ENCODE measurements at regions of chr1 and their contacts with region 1.

Region 1: GRCh38 chr1:30718636-30719405 is 4.6 kb downstream of the MATN1 start:
- DNase-seq: peak; percentile 89
- ATAC-seq: peak; percentile 69
- H3K4me3 Mint-ChIP-seq: peak overlapping the region; percentile 87
- H3K27ac Mint-ChIP-seq: peak overlapping the region; percentile 96
- H3K4me1 Mint-ChIP-seq: peaks cover 15% of the 10 kb centered on the region
- H3K27me3 Mint-ChIP-seq: no peaks in the 10 kb centered on the region

Region 2: DNA sequence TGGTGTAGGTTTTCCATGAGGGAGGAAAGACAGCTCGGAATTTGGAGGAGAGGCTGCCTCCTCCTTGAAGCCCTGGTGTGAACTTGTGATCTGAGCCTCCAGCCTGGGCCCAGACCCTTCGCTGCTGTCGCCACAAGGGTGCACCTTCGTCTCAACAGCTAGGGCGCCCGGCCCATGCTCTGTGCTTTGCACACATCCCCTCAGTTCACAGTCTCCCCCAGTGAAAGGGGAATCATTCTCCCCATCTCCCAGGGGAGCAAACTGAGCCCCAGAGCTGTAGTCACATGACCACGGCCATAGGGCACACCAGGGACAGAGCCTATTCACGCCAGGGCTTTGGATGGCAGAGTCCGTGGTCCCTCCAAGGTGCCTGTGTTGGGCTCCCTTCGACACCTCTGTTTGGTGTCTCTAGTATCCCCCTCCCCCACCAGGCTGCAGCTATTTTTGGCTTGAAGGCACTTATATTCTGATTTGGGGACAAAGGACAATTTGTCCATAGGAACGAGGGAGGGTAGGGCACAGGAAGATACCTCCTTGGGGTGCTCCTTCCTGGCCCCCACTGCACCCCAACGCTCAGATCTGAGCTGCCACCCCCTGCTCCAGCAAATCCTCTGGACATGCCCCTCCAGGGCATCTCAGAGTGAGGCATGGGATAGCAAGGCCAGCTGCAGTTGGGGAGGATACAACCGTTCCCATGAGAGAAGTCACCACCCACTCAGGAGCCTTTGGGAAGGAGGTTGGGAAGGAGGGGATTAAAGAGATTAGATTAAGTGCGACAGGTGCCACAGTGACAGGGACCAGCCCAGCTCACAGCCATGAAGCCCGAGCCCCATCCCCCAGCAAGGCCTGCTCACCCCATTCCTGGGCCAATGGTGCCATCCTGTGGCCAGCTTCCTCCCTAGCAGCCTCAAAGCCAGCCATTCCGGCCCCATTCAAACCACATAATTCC is 11.1 kb before region 1 on chr1:
- CTCF ChIA-PET with region 1: interaction called, 11 read pairs
- DNase-seq: peak; percentile 61
- ATAC-seq: peak; percentile 63
- H3K4me3 Mint-ChIP-seq: no peak overlapping the region
- H3K27ac Mint-ChIP-seq: no peak overlapping the region
- H3K4me1 Mint-ChIP-seq: no peaks in the 10 kb centered on the region
- H3K27me3 Mint-ChIP-seq: peaks cover 21% of the 10 kb centered on the region

Region 3: DNA sequence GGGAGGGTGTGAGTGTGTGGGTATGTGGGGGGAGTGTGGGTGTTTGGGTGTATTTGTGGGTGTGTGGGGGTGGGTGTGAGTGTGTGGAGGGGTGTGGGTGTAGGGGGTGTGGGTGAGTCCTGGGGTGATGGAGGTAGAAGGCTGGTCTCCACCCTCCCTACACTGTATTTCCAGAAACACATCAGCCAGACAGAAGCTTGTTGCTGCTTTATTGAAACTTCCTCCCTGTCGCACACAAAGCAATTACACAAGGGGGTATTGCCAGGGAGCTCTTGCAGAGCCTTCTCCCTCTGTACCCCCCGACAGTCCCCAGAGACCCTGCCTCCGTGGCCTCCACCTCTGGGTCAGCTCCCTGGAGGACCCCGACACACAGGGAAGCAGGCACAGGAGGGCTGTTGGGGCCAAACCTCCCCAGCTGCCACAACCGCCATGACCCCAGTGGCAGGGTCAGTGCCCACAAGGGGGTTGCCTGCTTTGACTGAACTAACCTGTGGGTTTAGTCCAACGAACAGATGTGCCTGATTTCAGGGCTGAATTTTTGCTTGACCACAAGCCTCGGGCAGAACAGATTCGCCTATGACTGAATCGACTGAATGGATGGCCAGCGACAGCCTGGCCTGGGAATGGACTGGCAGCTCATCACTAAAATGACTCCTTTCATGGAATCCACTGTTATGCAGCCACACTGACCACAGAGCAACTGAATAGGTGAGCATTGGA is 13.6 kb after region 1 on chr1:
- CTCF ChIA-PET with region 1: interaction called, 55 read pairs
- DNase-seq: no peak
- ATAC-seq: no peak
- H3K4me3 Mint-ChIP-seq: no peak overlapping the region
- H3K27ac Mint-ChIP-seq: peak overlapping the region; percentile 26
- H3K4me1 Mint-ChIP-seq: peaks cover 19% of the 10 kb centered on the region
- H3K27me3 Mint-ChIP-seq: no peaks in the 10 kb centered on the region

Region 4: GRCh38 chr1:30743584-30744059 is 24.8 kb after region 1 on chr1:
- CTCF ChIA-PET with region 1: interaction called, 141 read pairs
- DNase-seq: peak; percentile 89
- ATAC-seq: peak; percentile 81
- H3K4me3 Mint-ChIP-seq: peak overlapping the region; percentile 64
- H3K27ac Mint-ChIP-seq: peak overlapping the region; percentile 96
- H3K4me1 Mint-ChIP-seq: peaks cover 98% of the 10 kb centered on the region
- H3K27me3 Mint-ChIP-seq: no peaks in the 10 kb centered on the region

Region 5: DNA sequence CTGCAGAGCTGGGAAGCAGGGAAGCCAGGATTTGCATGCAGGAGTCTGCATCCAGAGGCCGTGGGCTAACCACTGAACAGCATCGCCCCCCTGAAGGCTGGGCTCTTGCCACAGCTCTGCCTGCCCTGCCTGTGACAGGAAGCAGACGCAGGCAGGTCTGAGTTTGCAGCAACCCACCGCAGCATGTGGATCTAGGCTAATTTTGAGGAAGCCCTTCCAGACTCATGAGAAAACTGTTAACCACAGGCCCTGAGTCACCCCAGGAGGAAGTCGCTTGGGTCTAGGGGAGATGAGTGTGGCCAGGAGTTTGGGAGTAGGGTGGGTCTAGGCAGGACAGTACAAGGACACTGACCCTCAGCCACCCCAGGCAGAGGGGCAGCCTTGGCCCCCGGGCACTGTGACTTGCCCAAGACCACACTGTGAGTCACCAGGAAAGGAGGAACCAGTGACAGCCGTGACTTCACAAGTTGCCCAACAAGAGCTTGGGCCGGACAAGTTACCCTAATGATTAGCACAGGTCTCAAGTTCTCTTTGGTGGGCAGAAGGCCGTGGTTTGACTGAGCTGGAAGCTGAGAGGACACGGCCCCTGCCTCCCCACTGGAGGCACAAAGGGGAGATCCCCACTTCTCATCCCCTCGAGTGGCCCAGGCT is 37.8 kb after region 1 on chr1:
- CTCF ChIA-PET with region 1: interaction called, 141 read pairs
- DNase-seq: peak; percentile 92
- ATAC-seq: peak; percentile 69
- H3K4me3 Mint-ChIP-seq: peak overlapping the region; percentile 98
- H3K27ac Mint-ChIP-seq: peak overlapping the region; percentile 95
- H3K4me1 Mint-ChIP-seq: peaks cover 82% of the 10 kb centered on the region
- H3K27me3 Mint-ChIP-seq: no peaks in the 10 kb centered on the region

Region 6: DNA sequence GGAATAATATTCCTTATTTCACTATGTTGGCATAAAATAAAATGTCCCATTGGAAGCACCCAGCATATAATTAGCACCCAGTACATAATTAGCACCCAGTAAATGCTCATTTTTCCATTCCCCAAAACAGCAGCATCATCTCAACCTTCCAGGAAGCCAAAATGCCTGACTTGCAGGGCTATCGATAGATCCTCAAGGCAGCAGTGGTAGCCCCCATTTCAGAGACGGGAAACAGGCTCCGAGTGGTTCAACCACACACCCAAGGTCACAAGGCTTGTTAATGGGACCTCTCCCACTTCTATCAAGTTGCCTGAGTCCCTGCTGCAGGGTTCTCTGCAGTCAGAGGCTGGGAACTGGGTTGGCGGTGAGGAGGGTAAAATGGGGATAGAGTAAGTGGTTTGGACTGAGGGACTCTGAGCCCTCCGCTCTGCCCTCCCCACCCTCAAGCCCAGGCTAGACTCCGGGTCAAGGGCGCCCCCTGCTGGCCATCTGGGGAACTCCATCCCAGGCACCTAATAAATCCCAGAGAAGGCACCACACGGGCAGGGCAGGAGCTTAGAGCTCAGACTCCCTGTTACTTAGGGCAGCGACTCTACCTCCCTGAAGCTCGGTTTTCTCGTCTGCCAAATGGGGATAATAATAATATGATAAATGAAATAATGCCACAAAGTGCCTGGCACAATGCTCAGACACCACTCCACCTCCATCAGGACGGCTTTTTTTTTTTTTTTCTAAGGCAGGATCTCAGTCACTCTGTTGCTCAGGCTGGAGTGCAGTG is 60.7 kb after region 1 on chr1:
- CTCF ChIA-PET with region 1: interaction called, 759 read pairs
- DNase-seq: peak; percentile 93
- ATAC-seq: peak; percentile 77
- H3K4me3 Mint-ChIP-seq: no peak overlapping the region
- H3K27ac Mint-ChIP-seq: no peak overlapping the region
- H3K4me1 Mint-ChIP-seq: peaks cover 13% of the 10 kb centered on the region
- H3K27me3 Mint-ChIP-seq: peaks cover 7% of the 10 kb centered on the region

Region 7: GRCh38 chr1:30929135-30929889 is 210.5 kb after region 1 on chr1:
- CTCF ChIA-PET with region 1: interaction called, 12 read pairs
- DNase-seq: peak; percentile 65
- ATAC-seq: peak; percentile 76
- H3K4me3 Mint-ChIP-seq: no peak overlapping the region
- H3K27ac Mint-ChIP-seq: peak overlapping the region; percentile 8
- H3K4me1 Mint-ChIP-seq: peaks cover 8% of the 10 kb centered on the region
- H3K27me3 Mint-ChIP-seq: no peaks in the 10 kb centered on the region